BJ (cell line): ENCODE measurements at regions of chr3 and their contacts with region 1.

Region 1: DNA sequence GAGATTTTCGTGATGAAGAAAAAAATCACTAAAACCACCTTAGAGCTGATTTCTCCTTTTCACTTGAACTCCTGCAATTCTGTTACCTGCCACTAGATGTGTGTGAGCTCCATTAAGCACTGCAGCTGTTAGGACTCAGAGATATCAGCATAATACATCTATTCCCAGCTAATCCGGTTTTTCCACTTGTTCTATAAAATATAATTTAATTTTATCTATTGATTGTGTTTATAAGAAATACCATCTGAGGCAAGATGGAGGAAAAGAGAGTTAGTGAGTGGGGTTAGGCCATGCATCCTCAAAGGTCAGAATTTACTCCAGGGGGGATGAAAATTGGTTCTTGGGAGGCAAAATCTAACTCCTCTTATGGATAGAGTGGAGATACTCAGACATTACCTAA is 152.7 kb downstream of the IL20RB start:
- DNase-seq: no peak
- H3K4me3 ChIP-seq: no peak overlapping the region
- H3K27me3 ChIP-seq: peaks cover 6% of the 10 kb centered on the region; the same call in 1 of the 2 replicates
- CTCF ChIP-seq: peak; percentile 84

Region 2: GRCh38 chr3:137099364-137100219 is 10.9 kb before region 1 on chr3:
- CTCF ChIA-PET with region 1: interaction called, 30 read pairs
- POLR2A ChIA-PET with region 1: no interaction called
- DNase-seq: no peak
- H3K4me3 ChIP-seq: no peak overlapping the region
- H3K27me3 ChIP-seq: 0 out of 2 replicates have a peak, but pooled peaks cover 2% of the 10 kb centered on the region
- CTCF ChIP-seq: no peak

Region 3: GRCh38 chr3:137121704-137122314 is 11.3 kb after region 1 on chr3:
- CTCF ChIA-PET with region 1: interaction called, 28 read pairs
- POLR2A ChIA-PET with region 1: no interaction called
- DNase-seq: no peak
- H3K4me3 ChIP-seq: no peak overlapping the region
- H3K27me3 ChIP-seq: no peaks in the 10 kb centered on the region
- CTCF ChIP-seq: peak; percentile 69

Region 4: DNA sequence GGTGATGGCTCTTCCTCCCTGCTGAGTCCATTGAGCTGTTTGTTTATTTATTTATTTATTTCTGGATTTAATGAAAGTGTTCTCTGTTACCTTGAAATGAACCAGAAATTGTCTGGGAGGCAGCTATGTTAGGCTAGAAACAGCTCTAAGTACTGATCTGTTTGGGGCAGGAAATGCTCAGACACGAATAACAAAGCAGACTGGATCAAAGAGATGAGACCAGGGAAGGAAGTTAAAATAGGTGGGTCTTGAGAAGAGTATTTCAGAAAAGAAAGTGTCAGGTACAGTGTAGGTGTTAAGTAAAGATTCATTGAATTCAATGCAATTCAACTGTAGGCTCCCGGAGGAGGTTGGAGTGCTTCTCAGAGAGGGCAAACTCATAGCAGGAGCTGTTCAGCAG is 20.6 kb after region 1 on chr3:
- CTCF ChIA-PET with region 1: interaction called, 13 read pairs
- POLR2A ChIA-PET with region 1: no interaction called
- DNase-seq: no peak
- H3K4me3 ChIP-seq: no peak overlapping the region
- H3K27me3 ChIP-seq: peaks cover 2% of the 10 kb centered on the region; the same call in 1 of the 2 replicates
- CTCF ChIP-seq: no peak

Region 5: GRCh38 chr3:137946345-137946973 is 836.0 kb after region 1 on chr3:
- CTCF ChIA-PET with region 1: interaction called, 21 read pairs
- POLR2A ChIA-PET with region 1: no interaction called
- DNase-seq: no peak
- H3K4me3 ChIP-seq: no peak overlapping the region
- H3K27me3 ChIP-seq: no peaks in the 10 kb centered on the region
- CTCF ChIP-seq: peak; percentile 66

Region 6: DNA sequence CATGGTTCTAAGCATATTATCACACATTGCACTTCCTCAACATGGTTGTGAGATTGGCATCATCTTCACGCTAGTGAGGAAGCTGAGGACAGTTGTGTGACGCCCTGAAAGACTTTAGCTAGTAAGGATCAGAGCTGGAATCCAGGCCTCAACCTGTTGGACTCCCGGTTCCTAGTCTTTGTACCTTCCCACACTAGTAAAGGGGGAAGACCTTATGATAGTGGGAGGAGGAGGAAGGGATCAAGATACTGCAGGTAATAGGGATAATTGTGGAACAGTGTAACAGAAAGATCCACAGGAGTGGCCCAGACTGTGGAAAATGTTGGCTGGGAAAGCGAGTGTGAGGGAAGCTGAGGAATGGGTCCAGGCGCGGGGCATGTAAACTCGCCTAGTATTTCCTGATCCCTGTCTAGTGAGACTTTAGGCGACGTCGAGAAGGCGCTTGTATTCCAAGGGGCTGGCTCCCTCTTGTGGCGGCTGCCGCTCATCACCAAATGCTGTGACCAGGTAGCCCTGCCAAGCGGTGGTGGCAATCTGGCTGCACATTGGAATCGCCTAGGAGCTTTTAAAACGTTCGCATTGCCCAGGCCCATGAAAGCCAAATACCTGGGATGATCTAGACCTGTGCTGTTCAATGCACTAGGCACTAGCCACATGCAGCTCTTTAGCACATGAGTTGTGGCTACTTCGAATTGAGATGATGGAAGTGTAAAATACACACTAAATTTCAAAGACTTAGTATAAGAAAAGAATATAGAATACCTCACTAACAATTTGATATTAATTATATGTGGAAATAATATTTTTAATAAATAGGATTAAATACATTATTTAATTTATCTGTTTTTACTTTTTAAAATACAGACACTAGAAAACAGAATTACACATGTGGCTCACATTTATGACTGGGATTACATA is 860.7 kb after region 1 on chr3:
- CTCF ChIA-PET with region 1: interaction called, 17 read pairs
- POLR2A ChIA-PET with region 1: no interaction called
- DNase-seq: no peak
- H3K4me3 ChIP-seq: no peak overlapping the region
- H3K27me3 ChIP-seq: 0 out of 2 replicates have a peak, but pooled peaks cover 2% of the 10 kb centered on the region
- CTCF ChIP-seq: peak; percentile 98

Region 7: GRCh38 chr3:138051946-138052802 is 941.7 kb after region 1 on chr3:
- CTCF ChIA-PET with region 1: interaction called, 14 read pairs
- POLR2A ChIA-PET with region 1: no interaction called
- DNase-seq: no peak
- H3K4me3 ChIP-seq: no peak overlapping the region
- H3K27me3 ChIP-seq: no peaks in the 10 kb centered on the region
- CTCF ChIP-seq: peak; percentile 72